Caco-2 (cell line): ENCODE measurements at regions of chr10 and their contacts with region 1.

Region 1: GRCh38 chr10:11913074-11913641 is 90.0 kb downstream of the PROSER2 start:
- DNase-seq: peak; percentile 56 to 62
- H3K4me3 ChIP-seq: no peak overlapping the region
- H3K4me3 Mint-ChIP-seq: peak overlapping the region; percentile 47
- H3K27ac Mint-ChIP-seq: peak overlapping the region; percentile 80
- H3K4me1 ChIP-seq: peaks cover 25% of the 10 kb centered on the region
- H3K4me1 Mint-ChIP-seq: peaks cover 13% of the 10 kb centered on the region
- H3K27me3 ChIP-seq: no peaks in the 10 kb centered on the region
- H3K27me3 Mint-ChIP-seq: no peaks in the 10 kb centered on the region
- CTCF ChIP-seq: no peak

Region 2: DNA sequence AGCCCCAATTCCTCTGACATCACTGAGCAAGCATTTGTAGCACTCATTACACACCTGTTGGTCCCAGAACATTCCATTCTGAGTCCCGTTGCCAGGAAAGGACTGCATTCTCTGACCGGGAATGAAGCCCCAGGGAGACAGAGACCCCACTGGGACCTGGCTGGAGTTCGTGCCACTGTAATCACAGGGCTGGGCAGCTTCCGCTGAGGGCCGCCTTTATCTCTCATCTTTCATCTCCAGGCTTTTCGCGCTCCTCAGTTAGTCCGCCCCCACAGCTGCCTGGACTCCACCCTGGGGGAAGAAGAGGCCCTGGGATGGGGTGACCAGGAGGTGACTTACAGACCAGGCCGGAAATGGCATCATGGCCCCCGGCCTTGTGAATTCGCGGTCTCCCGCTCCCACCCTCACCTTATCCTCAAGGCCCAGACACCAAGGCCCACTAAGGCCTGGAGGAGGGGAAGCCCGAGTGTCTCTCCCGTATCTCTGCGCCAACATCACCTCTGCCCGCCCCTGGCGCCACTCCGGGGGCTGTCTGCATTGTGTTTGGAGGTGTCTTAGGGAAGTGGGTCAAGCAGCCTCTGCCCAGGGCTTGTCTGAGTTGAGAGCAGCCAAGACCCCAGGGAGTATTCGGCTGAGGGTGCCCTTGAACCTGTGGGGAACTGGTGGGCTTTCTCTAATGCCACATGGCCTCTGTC is 14.6 kb before region 1 on chr10:
- CTCF ChIA-PET with region 1: no interaction called
- POLR2A ChIA-PET with region 1: interaction called, 3 read pairs
- intact Hi-C with region 1: loop called (anchors 1 kb)
- DNase-seq: peak; percentile 78 to 89
- H3K4me3 ChIP-seq: no peak overlapping the region
- H3K4me3 Mint-ChIP-seq: no peak overlapping the region
- H3K27ac Mint-ChIP-seq: peak overlapping the region; percentile 86
- H3K4me1 ChIP-seq: peaks cover 25% of the 10 kb centered on the region
- H3K4me1 Mint-ChIP-seq: peaks cover 39% of the 10 kb centered on the region
- H3K27me3 ChIP-seq: no peaks in the 10 kb centered on the region
- H3K27me3 Mint-ChIP-seq: no peaks in the 10 kb centered on the region
- CTCF ChIP-seq: no peak

Region 3: GRCh38 chr10:11934262-11934661 is 21.1 kb after region 1 on chr10:
- CTCF ChIA-PET with region 1: no interaction called
- POLR2A ChIA-PET with region 1: no interaction called
- intact Hi-C with region 1: loop called (anchors 2 kb)
- DNase-seq: no peak
- H3K4me3 ChIP-seq: no peak overlapping the region
- H3K4me3 Mint-ChIP-seq: no peak overlapping the region
- H3K27ac Mint-ChIP-seq: peak overlapping the region; percentile 10
- H3K4me1 ChIP-seq: peaks cover 19% of the 10 kb centered on the region
- H3K4me1 Mint-ChIP-seq: peaks cover 28% of the 10 kb centered on the region
- H3K27me3 ChIP-seq: no peaks in the 10 kb centered on the region
- H3K27me3 Mint-ChIP-seq: no peaks in the 10 kb centered on the region
- CTCF ChIP-seq: no peak

Region 4: DNA sequence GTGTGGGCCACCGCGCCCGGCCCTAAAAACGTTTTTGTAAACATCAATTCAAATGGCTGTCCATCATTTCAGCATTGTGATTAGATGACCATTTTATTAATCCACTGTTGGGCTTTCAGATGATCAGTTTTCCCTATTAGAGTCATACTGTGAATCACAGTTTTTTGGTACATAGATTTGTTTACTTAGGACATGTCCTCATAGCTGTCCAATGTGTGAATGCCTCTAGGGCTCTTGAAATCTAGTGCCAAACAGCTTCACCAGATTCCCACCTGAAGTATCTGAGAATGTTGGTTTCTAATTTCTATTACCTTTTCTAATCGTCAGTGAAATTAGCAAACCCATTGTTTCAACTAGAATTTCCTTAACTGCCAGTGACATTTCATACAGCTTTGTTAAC is 62.6 kb after region 1 on chr10:
- CTCF ChIA-PET with region 1: no interaction called
- POLR2A ChIA-PET with region 1: no interaction called
- intact Hi-C with region 1: no loop called
- DNase-seq: no peak
- H3K4me3 ChIP-seq: no peak overlapping the region
- H3K4me3 Mint-ChIP-seq: no peak overlapping the region
- H3K27ac Mint-ChIP-seq: no peak overlapping the region
- H3K4me1 ChIP-seq: no peaks in the 10 kb centered on the region
- H3K4me1 Mint-ChIP-seq: no peaks in the 10 kb centered on the region
- H3K27me3 ChIP-seq: no peaks in the 10 kb centered on the region
- H3K27me3 Mint-ChIP-seq: no peaks in the 10 kb centered on the region
- CTCF ChIP-seq: no peak